B cell (primary cell): ENCODE measurements at regions of chr1 and their contacts with region 1.

Region 1: DNA sequence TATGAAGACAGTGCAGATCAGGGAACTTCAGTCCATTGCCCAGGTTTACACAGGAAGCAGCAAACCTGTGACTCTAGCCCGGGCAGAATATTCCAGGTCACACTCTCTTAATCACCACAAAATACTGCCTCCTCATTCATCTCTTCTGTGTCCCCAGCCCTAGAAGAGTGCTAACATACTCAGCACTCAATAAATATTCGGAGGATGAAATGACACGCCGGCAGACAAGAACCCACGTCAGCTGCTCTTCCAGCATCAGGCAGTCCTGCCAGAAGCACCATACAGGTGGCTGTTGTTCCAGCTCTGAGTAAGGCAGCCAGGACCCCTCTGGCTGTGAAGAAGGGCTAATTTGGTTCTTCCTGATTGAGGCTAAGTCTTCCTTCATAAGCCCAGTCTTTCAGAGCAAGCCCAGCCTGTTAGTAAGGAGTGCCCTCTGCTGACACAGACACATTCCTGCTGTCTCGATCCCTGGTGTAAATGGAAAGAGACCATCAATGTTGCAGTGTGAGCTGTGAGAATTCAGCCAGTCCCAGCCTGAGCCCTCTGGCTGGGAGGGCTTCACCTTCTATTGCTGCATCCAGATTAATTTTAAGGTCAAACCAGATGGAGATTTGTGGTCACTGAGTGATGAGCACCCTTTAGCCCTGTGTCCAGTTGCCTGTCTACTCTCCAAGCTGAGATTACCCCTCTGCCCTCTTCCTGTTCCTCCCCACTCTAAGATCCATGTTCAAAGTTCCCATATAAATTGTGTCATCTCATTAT is 45.0 kb upstream of the KIRREL1 start:
- DNase-seq: peak; percentile 63
- ATAC-seq: peak; percentile 53
- H3K4me3 ChIP-seq: no peak overlapping the region
- H3K4me3 Mint-ChIP-seq: no peak overlapping the region
- H3K27ac ChIP-seq: no peak overlapping the region
- H3K27ac Mint-ChIP-seq: no peak overlapping the region
- H3K4me1 ChIP-seq: peaks cover 17 to 18% of the 10 kb centered on the region in 2 donors
- H3K4me1 Mint-ChIP-seq: peaks cover 27% of the 10 kb centered on the region
- H3K27me3 ChIP-seq: peaks cover 0 to 8% (median 0%) of the 10 kb centered on the region in 4 experiments
- H3K27me3 Mint-ChIP-seq: peaks cover 12% of the 10 kb centered on the region
- CTCF ChIP-seq: peak; percentile 67

Region 2: GRCh38 chr1:157505481-157506272 is 442.8 kb before region 1 on chr1:
- CTCF ChIA-PET with region 1: no interaction called
- POLR2A ChIA-PET with region 1: no interaction called
- intact Hi-C with region 1: loop called (anchors 5 kb)
- DNase-seq: peak; percentile 77
- ATAC-seq: peak; percentile 96
- H3K4me3 ChIP-seq: peak overlapping the region in 1 of 5 experiments; percentile 18
- H3K4me3 Mint-ChIP-seq: peak overlapping the region; percentile 73
- H3K27ac ChIP-seq: no peak overlapping the region
- H3K27ac Mint-ChIP-seq: peak overlapping the region; percentile 32
- H3K4me1 ChIP-seq: peaks cover 20 to 30% of the 10 kb centered on the region in 2 donors
- H3K4me1 Mint-ChIP-seq: peaks cover 39% of the 10 kb centered on the region
- H3K27me3 ChIP-seq: no peaks in the 10 kb centered on the region
- H3K27me3 Mint-ChIP-seq: no peaks in the 10 kb centered on the region
- CTCF ChIP-seq: peak; percentile 86

Region 3: DNA sequence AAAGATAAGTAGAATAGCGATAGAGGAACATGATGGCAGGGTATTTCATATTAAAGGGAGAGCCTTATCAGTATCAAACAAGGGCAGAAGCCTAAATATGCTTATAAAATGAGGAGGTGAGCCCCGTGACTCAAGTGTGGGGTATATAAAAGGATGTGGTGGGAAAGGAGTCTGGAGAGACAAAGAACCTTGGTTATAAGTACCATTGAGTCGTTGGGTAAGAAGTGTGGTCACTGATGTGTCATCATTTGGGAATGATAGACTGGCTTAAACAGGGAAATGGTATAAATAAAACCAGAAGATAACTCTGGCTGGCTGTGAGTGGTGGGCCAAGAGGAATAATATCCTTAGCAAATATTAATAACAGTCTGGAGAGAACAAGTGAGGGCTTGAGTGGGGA is 96.0 kb before region 1 on chr1:
- CTCF ChIA-PET with region 1: no interaction called
- POLR2A ChIA-PET with region 1: no interaction called
- intact Hi-C with region 1: no loop called
- DNase-seq: no peak
- ATAC-seq: no peak
- H3K4me3 ChIP-seq: no peak overlapping the region
- H3K4me3 Mint-ChIP-seq: no peak overlapping the region
- H3K27ac ChIP-seq: no peak overlapping the region
- H3K27ac Mint-ChIP-seq: no peak overlapping the region
- H3K4me1 ChIP-seq: peaks cover 32 to 40% of the 10 kb centered on the region in 2 donors
- H3K4me1 Mint-ChIP-seq: peaks cover 62% of the 10 kb centered on the region
- H3K27me3 ChIP-seq: no peaks in the 10 kb centered on the region
- H3K27me3 Mint-ChIP-seq: no peaks in the 10 kb centered on the region
- CTCF ChIP-seq: no peak

Region 4: GRCh38 chr1:157878059-157878458 is 70.4 kb before region 1 on chr1:
- CTCF ChIA-PET with region 1: interaction called, 15 read pairs
- POLR2A ChIA-PET with region 1: no interaction called
- intact Hi-C with region 1: loop called (anchors 2 kb)
- DNase-seq: peak; percentile 51
- ATAC-seq: no peak
- H3K4me3 ChIP-seq: no peak overlapping the region
- H3K4me3 Mint-ChIP-seq: no peak overlapping the region
- H3K27ac ChIP-seq: no peak overlapping the region
- H3K27ac Mint-ChIP-seq: no peak overlapping the region
- H3K4me1 ChIP-seq: peaks cover 11 to 13% of the 10 kb centered on the region in 2 donors
- H3K4me1 Mint-ChIP-seq: peaks cover 20% of the 10 kb centered on the region
- H3K27me3 ChIP-seq: no peaks in the 10 kb centered on the region
- H3K27me3 Mint-ChIP-seq: no peaks in the 10 kb centered on the region
- CTCF ChIP-seq: peak; percentile 29